ENCODE measurements at regions of chr9 and their contacts with region 1.

Region 1: GRCh38 chr9:1869843-1870242 is 145.3 kb upstream of the SMARCA2 start:
- DNase-seq: no peak
- ATAC-seq: no peak
- H3K4me3 ChIP-seq: no peak overlapping the region
- H3K27ac ChIP-seq: no peak overlapping the region
- H3K4me1 ChIP-seq: no peaks in the 10 kb centered on the region
- H3K27me3 ChIP-seq: peaks cover 0 to 4% (median 0%) of the 10 kb centered on the region in 9 donors
- CTCF ChIP-seq: peak in 8 of 12 donors; percentile 8 to 42 (median 32)
- POLR2A ChIP-seq: no peak

Region 2: DNA sequence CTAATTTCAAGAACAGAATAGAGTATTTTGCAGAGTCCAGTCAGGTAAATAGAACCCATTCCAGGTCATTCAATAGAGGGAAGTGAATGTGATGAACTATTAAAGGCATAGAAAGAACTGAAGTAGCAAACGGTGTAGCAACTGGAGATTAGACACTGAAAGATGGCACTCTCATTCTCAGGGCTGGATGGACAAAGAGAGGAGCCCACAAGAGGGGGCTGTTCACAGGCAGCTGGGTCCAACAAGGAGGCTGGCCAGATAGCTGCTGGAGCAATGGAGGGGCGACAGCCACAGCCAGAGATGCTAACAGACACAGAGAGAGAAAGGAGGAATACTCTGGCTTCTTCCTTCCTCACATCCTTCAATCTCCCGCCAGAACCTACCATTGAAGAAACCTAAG is 52.2 kb after region 1 on chr9:
- intact Hi-C with region 1: loop called in 1 of 10 experiments (anchors 5 kb)
- DNase-seq: no peak
- ATAC-seq: no peak
- H3K4me3 ChIP-seq: no peak overlapping the region
- H3K27ac ChIP-seq: no peak overlapping the region
- H3K4me1 ChIP-seq: no peaks in the 10 kb centered on the region
- H3K27me3 ChIP-seq: peaks cover 0 to 33% (median 3%) of the 10 kb centered on the region in 9 donors
- CTCF ChIP-seq: no peak
- POLR2A ChIP-seq: no peak